Caco-2 (cell line): ENCODE measurements at regions of chr13 and their contacts with region 1.

Region 1: DNA sequence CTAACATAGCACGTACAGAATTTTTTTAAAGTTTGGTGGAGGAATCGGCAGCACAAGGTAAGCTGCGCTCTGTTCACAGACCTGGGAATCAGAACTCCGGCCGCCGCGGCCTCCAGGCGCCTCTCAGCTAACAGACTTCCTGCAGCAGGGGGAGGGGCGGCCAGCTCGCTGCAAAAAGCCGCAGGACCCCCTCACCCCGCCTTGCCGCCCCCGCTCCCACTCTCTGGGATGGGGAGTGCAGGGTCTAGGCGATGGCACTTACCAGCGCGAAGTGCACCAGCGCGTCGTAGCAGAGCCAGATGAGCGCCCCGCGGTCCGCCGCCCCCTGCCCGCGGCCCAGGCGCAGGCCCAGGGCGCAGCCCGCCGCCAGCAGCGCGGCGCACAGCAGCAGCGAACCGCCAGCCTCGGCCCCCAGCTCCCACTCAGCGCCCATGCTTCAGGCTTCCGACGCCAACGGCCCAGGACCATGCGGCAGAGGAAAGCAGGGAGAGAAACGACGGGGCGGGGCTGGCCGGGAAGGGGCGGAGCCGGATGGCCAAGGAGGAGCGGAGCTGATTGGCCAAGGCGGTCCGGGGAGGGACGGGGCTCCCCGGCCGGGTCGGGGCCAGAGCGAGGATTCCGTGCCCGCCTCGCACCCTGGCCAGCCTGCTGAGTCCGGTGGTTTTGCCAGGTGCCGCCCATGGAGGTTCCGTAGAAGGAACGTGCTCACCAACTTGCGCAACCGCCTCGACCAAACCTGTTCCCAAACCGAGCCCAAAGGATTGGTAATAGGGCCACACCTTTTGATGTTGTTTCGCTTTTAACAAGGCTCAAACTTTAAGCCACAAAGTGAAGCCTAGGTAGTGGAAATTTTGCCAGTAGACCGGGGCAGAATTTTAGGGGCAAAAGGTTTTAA is at the start of gene EBPL:
- DNase-seq: peak; percentile 96 to 97
- H3K4me3 ChIP-seq: peak within 1 kb of the TSS; percentile 67
- H3K4me3 Mint-ChIP-seq: peak within 1 kb of the TSS; percentile 83
- H3K27ac Mint-ChIP-seq: peak within 1 kb of the TSS; percentile 79
- H3K4me1 ChIP-seq: peaks cover 27% of the 10 kb centered on the region; the same call in 1 of the 2 replicates
- H3K4me1 Mint-ChIP-seq: peaks cover 27% of the 10 kb centered on the region
- H3K27me3 ChIP-seq: no peaks in the 10 kb centered on the region
- H3K27me3 Mint-ChIP-seq: no peaks in the 10 kb centered on the region
- CTCF ChIP-seq: no peak
- total RNA-seq, gene EBPL: 105 and 114 TPM in 2 replicates

Region 2: DNA sequence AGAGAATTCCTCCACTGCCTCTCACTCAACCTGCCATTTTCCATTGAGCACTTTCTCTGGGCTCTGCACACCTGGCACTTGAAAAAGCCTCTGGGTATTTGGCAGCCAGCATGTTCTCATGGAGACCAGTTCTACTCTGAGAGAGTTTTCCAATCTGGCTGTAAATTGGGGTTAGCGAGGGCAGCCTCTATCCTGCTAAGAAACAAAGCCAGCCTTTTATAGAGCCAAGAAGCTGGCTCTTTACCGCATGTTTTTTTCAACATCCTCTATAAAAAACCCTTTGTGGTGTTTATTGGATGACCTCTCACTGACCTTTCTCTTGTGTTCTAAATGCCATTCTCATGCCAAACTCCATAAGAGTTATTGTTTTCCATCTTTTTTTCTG is 1105.8 kb before region 1 on chr13:
- CTCF ChIA-PET with region 1: no interaction called
- POLR2A ChIA-PET with region 1: no interaction called
- intact Hi-C with region 1: no loop called
- DNase-seq: no peak
- H3K4me3 ChIP-seq: no peak overlapping the region
- H3K4me3 Mint-ChIP-seq: no peak overlapping the region
- H3K27ac Mint-ChIP-seq: no peak overlapping the region
- H3K4me1 ChIP-seq: peaks cover 9% of the 10 kb centered on the region; the same call in 1 of the 2 replicates
- H3K4me1 Mint-ChIP-seq: no peaks in the 10 kb centered on the region
- H3K27me3 ChIP-seq: no peaks in the 10 kb centered on the region
- H3K27me3 Mint-ChIP-seq: peaks cover 3% of the 10 kb centered on the region
- CTCF ChIP-seq: no peak

Region 3: GRCh38 chr13:49739498-49740187 is 48.4 kb after region 1 on chr13:
- CTCF ChIA-PET with region 1: interaction called, 7 read pairs
- POLR2A ChIA-PET with region 1: interaction called, 6 read pairs
- intact Hi-C with region 1: loop called (anchors 2 kb)
- DNase-seq: peak in 1 of 2 experiments; percentile 53
- H3K4me3 ChIP-seq: no peak overlapping the region
- H3K4me3 Mint-ChIP-seq: no peak overlapping the region
- H3K27ac Mint-ChIP-seq: no peak overlapping the region
- H3K4me1 ChIP-seq: peaks cover 32% of the 10 kb centered on the region
- H3K4me1 Mint-ChIP-seq: peaks cover 31% of the 10 kb centered on the region
- H3K27me3 ChIP-seq: no peaks in the 10 kb centered on the region
- H3K27me3 Mint-ChIP-seq: no peaks in the 10 kb centered on the region
- CTCF ChIP-seq: no peak

Region 4: DNA sequence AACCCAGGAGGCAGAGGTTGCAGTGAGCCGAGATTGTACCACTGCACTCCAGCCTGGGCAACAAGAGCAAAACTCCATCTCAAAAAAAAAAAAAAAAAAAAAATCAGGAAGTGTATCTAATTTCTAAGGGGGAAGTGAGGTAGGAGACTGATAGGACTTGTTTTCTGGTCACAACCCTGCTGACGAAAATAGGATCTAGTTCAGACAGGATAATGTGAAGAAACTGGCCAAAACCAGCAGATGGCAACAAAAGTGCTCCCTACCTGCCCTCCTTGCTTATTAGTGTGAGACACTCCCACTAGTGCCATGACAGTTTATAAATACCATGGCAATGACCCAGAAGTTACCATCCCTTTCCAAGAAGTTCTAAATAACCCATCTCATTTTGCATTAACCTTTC is 137.2 kb after region 1 on chr13:
- CTCF ChIA-PET with region 1: no interaction called
- POLR2A ChIA-PET with region 1: interaction called, 12 read pairs
- intact Hi-C with region 1: no loop called
- DNase-seq: no peak
- H3K4me3 ChIP-seq: no peak overlapping the region
- H3K4me3 Mint-ChIP-seq: no peak overlapping the region
- H3K27ac Mint-ChIP-seq: no peak overlapping the region
- H3K4me1 ChIP-seq: peaks cover 13% of the 10 kb centered on the region
- H3K4me1 Mint-ChIP-seq: peaks cover 13% of the 10 kb centered on the region
- H3K27me3 ChIP-seq: no peaks in the 10 kb centered on the region
- H3K27me3 Mint-ChIP-seq: no peaks in the 10 kb centered on the region
- CTCF ChIP-seq: no peak